ENCODE measurements at regions of chr1 and their contacts with region 1.

Region 1: GRCh38 chr1:31815752-31816500 is at the start of gene SPOCD1:
- DNase-seq: peak; percentile 89
- ATAC-seq: peak; percentile 90
- H3K4me3 Mint-ChIP-seq: no peak within 1 kb of the TSS
- H3K27ac Mint-ChIP-seq: peak within 1 kb of the TSS; percentile 57
- H3K4me1 Mint-ChIP-seq: peaks cover 12% of the 10 kb centered on the region
- H3K27me3 Mint-ChIP-seq: no peaks in the 10 kb centered on the region
- total RNA-seq, gene SPOCD1: not detected

Region 2: GRCh38 chr1:31725777-31726535 is 90.0 kb before region 1 on chr1:
- CTCF ChIA-PET with region 1: no interaction called
- POLR2A ChIA-PET with region 1: no interaction called
- DNase-seq: no peak
- ATAC-seq: no peak
- H3K4me3 Mint-ChIP-seq: no peak overlapping the region
- H3K27ac Mint-ChIP-seq: no peak overlapping the region
- H3K4me1 Mint-ChIP-seq: no peaks in the 10 kb centered on the region
- H3K27me3 Mint-ChIP-seq: peaks cover 3% of the 10 kb centered on the region

Region 3: GRCh38 chr1:31745096-31745945 is 70.6 kb before region 1 on chr1:
- CTCF ChIA-PET with region 1: no interaction called
- POLR2A ChIA-PET with region 1: no interaction called
- DNase-seq: peak; percentile 80
- ATAC-seq: peak; percentile 89
- H3K4me3 Mint-ChIP-seq: no peak overlapping the region
- H3K27ac Mint-ChIP-seq: no peak overlapping the region
- H3K4me1 Mint-ChIP-seq: peaks cover 32% of the 10 kb centered on the region
- H3K27me3 Mint-ChIP-seq: no peaks in the 10 kb centered on the region

Region 4: DNA sequence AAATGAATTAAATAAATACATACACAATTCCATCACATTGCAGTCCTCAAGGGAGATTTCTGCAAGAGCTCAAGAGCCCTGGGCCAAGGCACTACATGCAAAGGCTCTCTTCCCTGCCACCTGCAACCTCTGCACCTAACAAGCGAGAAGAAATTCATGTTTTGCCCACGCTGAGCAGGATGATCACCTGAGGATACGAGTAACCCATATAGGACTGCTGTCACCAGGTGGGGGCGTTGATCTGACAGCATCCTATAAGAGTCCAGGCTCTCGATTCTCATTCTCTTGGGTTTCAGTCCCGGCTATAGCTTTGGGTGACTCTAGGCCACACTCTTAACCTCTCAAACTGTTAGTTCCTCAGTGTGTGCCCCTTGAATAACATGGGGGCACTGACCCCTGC is 18.6 kb after region 1 on chr1:
- CTCF ChIA-PET with region 1: interaction called, 10 read pairs
- POLR2A ChIA-PET with region 1: no interaction called
- DNase-seq: no peak
- ATAC-seq: no peak
- H3K4me3 Mint-ChIP-seq: no peak overlapping the region
- H3K27ac Mint-ChIP-seq: no peak overlapping the region
- H3K4me1 Mint-ChIP-seq: peaks cover 22% of the 10 kb centered on the region
- H3K27me3 Mint-ChIP-seq: peaks cover 3% of the 10 kb centered on the region

Region 5: DNA sequence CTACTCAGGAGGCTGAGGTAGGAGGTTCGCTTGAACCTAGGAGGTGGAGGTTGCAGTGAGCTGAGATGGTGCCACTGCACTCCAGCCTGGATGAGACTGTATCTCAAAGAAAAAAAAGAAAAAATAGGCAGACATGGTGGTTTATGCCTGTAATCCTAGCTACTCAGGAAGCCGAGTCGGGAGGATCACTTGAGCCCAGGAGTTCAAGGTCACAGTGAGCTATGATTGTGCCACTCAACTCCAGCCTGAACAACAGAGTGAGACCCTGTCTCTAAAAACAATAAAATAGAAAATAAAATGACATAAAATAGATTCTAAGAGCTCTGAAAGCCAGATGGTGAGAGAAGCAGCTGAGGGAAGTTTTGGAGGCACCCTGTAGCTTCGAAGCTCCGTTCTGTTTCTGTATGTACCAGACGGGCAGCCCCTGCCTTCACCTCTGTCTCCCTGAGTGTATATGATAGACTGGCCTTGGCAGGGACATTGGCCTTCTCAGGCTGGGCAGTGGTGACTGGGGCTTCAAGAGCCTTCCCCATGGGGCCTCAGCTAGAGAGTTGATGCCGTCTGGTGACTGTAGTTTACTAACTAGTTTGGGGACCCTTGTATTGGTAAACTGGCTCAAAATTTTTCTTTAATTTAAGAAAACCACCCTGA is 54.3 kb after region 1 on chr1:
- CTCF ChIA-PET with region 1: no interaction called
- POLR2A ChIA-PET with region 1: no interaction called
- DNase-seq: no peak
- ATAC-seq: no peak
- H3K4me3 Mint-ChIP-seq: no peak overlapping the region
- H3K27ac Mint-ChIP-seq: no peak overlapping the region
- H3K4me1 Mint-ChIP-seq: peaks cover 35% of the 10 kb centered on the region
- H3K27me3 Mint-ChIP-seq: no peaks in the 10 kb centered on the region

Region 6: GRCh38 chr1:31880890-31881687 is 65.2 kb after region 1 on chr1:
- CTCF ChIA-PET with region 1: no interaction called
- POLR2A ChIA-PET with region 1: no interaction called
- DNase-seq: no peak
- ATAC-seq: no peak
- H3K4me3 Mint-ChIP-seq: no peak overlapping the region
- H3K27ac Mint-ChIP-seq: no peak overlapping the region
- H3K4me1 Mint-ChIP-seq: peaks cover 30% of the 10 kb centered on the region
- H3K27me3 Mint-ChIP-seq: peaks cover 5% of the 10 kb centered on the region

Region 7: DNA sequence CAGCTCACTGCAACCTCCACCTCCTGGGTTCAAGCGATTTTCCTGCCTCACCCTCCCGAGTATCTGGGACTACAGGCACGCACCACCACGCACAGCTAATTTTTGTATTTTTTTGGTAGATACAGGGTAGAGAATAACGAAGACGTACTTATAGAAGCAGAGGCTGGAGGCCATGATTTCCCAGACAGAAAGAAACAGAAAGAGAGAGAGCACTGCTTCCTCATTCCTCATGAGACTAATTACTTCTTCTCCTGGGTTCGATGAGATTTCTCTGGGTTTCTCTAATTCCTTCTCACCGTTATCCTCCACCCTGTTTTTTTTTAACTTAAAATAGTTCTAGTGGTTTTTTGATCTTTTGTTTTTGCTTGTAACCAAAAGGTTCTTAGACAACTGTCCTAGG is 145.6 kb after region 1 on chr1:
- CTCF ChIA-PET with region 1: interaction called, 57 read pairs
- POLR2A ChIA-PET with region 1: no interaction called
- DNase-seq: no peak
- ATAC-seq: no peak
- H3K4me3 Mint-ChIP-seq: peak overlapping the region; percentile 29
- H3K27ac Mint-ChIP-seq: peak overlapping the region; percentile 71
- H3K4me1 Mint-ChIP-seq: peaks cover 75% of the 10 kb centered on the region
- H3K27me3 Mint-ChIP-seq: no peaks in the 10 kb centered on the region

Region 8: GRCh38 chr1:31984419-31985347 is 168.8 kb after region 1 on chr1:
- CTCF ChIA-PET with region 1: interaction called, 10 read pairs
- POLR2A ChIA-PET with region 1: interaction called, 3 read pairs
- DNase-seq: peak; percentile 50
- ATAC-seq: peak; percentile 70
- H3K4me3 Mint-ChIP-seq: peak overlapping the region; percentile 4
- H3K27ac Mint-ChIP-seq: peak overlapping the region; percentile 95
- H3K4me1 Mint-ChIP-seq: peaks cover 67% of the 10 kb centered on the region
- H3K27me3 Mint-ChIP-seq: no peaks in the 10 kb centered on the region

Measured in activated CD8-positive, alpha-beta T cell treated with anti-CD3 and anti-CD28 coated beads, Interleukin-2, amount 10 ng/mL, durations not matched to agents 7 days and 5 days (primary cell).